T-cell (primary cell): ENCODE measurements at regions of chr2 and their contacts with region 1.

Region 1: GRCh38 chr2:64260817-64261216 is 116.6 kb upstream of the PELI1 start:
- DNase-seq: peak in 25 of 35 experiments; percentile 3 to 52 (median 11)
- ATAC-seq: peak in 3 of 4 experiments; percentile 63 to 76 (median 64)
- H3K4me3 ChIP-seq: peak overlapping the region; percentile 21 to 64
- H3K4me3 Mint-ChIP-seq: peak overlapping the region; percentile 25 to 64 (median 55)
- H3K27ac ChIP-seq: no peak overlapping the region
- H3K27ac Mint-ChIP-seq: peak overlapping the region; percentile 90 to 93
- H3K4me1 ChIP-seq: peaks cover 7 to 9% of the 10 kb centered on the region in 2 experiments
- H3K4me1 Mint-ChIP-seq: peaks cover 7 to 12% (median 11%) of the 10 kb centered on the region in 3 donors
- H3K27me3 ChIP-seq: no peaks in the 10 kb centered on the region
- H3K27me3 Mint-ChIP-seq: no peaks in the 10 kb centered on the region

Region 2: DNA sequence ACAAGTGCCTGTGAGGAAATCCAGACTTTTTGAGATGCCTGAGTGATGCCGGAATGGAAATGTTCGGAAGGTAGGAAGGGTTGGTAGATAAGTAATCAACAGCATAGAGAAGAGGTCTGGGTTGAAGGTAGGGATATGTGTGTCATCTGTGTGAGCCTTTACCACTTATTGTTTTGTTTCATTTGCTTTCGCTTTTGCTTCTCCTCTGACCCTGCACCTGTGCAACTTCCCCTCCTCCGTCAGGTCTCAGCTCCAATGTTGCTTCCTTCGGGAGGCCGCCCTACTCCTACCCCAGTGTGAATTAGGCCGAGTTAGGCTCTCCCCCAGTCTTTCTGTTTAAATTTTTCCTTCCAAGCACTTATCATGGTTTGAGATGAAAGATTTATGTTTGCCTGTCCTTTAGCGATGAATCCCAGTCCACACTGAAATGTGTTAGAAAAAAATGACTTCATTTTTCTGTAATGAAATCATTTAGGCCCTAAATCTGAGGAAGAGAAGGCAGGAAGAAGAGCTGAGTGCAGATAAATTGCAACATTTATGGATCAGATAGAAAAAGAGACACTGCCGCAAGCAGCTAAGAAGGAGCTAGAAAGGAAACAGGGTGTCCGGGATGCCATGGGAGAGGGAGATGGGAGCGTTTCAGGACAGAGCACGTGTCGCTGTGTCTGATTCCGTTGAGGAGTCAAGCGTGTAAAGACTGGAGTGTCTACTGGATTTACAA is 23.0 kb after region 1 on chr2:
- CTCF ChIA-PET with region 1: interaction called in 1 of 2 experiments, 12 read pairs
- POLR2A ChIA-PET with region 1: no interaction called
- DNase-seq: peak in 11 of 35 experiments; percentile 5 to 51 (median 16)
- ATAC-seq: peak; percentile 89 to 99 (median 96)
- H3K4me3 ChIP-seq: peak overlapping the region; percentile 16 to 41
- H3K4me3 Mint-ChIP-seq: no peak overlapping the region
- H3K27ac ChIP-seq: peak overlapping the region; percentile 81
- H3K27ac Mint-ChIP-seq: no peak overlapping the region
- H3K4me1 ChIP-seq: peaks cover 4 to 17% of the 10 kb centered on the region in 2 experiments
- H3K4me1 Mint-ChIP-seq: no peaks in the 10 kb centered on the region
- H3K27me3 ChIP-seq: no peaks in the 10 kb centered on the region
- H3K27me3 Mint-ChIP-seq: no peaks in the 10 kb centered on the region

Region 3: DNA sequence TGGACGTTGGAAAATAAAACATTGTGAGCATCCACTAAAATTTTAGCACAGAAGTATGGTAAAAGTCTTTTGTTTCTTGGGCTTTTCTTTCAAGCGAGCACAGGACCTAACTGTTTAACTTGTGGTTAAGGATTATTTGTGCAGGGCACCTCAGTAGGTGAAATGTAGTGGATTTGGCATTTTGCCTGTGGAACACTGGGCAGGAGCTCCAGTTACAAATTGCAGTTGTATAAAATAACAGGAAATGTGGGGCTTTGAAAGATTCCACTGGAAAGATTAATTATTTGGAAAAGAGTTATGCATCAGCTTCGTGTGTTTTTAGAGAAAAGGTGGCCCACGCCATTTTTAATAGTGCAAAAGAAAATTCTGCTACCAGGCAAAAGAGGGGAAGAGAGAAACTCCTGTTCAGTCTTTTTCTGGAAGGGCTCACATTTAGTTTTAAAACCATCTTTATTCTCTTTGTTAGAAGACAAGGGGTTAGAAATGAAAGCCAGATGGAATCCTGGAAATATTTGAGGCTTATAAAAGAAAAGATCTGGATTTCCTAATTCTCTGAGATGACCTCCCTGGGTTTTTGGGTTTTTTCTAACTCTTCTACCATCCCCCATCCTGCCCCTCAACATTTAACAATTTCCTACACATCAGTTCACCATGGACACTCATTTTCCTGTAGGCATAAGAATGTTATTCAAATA is 537.2 kb after region 1 on chr2:
- CTCF ChIA-PET with region 1: no interaction called
- POLR2A ChIA-PET with region 1: no interaction called
- DNase-seq: no peak
- ATAC-seq: no peak
- H3K4me3 ChIP-seq: no peak overlapping the region
- H3K4me3 Mint-ChIP-seq: no peak overlapping the region
- H3K27ac ChIP-seq: no peak overlapping the region
- H3K27ac Mint-ChIP-seq: no peak overlapping the region
- H3K4me1 ChIP-seq: peaks cover 0 to 2% of the 10 kb centered on the region in 2 experiments
- H3K4me1 Mint-ChIP-seq: no peaks in the 10 kb centered on the region
- H3K27me3 ChIP-seq: peaks cover 0 to 10% of the 10 kb centered on the region in 2 experiments
- H3K27me3 Mint-ChIP-seq: peaks cover 0 to 3% of the 10 kb centered on the region in 2 donors